Endothelial cell of umbilical vein (primary cell): ENCODE measurements at regions of chr22 and their contacts with region 1.

Region 1: GRCh38 chr22:17742527-17742902 is 31.8 kb downstream of the BID start:
- DNase-seq: peak; percentile 49
- H3K4me3 ChIP-seq: no peak overlapping the region
- H3K27ac ChIP-seq: no peak overlapping the region
- H3K4me1 ChIP-seq: no peaks in the 10 kb centered on the region
- H3K27me3 ChIP-seq: no peaks in the 10 kb centered on the region
- CTCF ChIP-seq: peak; percentile 66 to 88
- POLR2A ChIP-seq: no peak

Region 2: GRCh38 chr22:17570851-17571641 is 171.5 kb before region 1 on chr22:
- CTCF ChIA-PET with region 1: no interaction called
- POLR2A ChIA-PET with region 1: no interaction called
- dilution Hi-C with region 1: no loop called
- intact Hi-C with region 1: no loop called
- DNase-seq: no peak
- H3K4me3 ChIP-seq: no peak overlapping the region
- H3K27ac ChIP-seq: no peak overlapping the region
- H3K4me1 ChIP-seq: peaks cover 3% of the 10 kb centered on the region
- H3K27me3 ChIP-seq: no peaks in the 10 kb centered on the region
- CTCF ChIP-seq: no peak
- POLR2A ChIP-seq: no peak

Region 3: DNA sequence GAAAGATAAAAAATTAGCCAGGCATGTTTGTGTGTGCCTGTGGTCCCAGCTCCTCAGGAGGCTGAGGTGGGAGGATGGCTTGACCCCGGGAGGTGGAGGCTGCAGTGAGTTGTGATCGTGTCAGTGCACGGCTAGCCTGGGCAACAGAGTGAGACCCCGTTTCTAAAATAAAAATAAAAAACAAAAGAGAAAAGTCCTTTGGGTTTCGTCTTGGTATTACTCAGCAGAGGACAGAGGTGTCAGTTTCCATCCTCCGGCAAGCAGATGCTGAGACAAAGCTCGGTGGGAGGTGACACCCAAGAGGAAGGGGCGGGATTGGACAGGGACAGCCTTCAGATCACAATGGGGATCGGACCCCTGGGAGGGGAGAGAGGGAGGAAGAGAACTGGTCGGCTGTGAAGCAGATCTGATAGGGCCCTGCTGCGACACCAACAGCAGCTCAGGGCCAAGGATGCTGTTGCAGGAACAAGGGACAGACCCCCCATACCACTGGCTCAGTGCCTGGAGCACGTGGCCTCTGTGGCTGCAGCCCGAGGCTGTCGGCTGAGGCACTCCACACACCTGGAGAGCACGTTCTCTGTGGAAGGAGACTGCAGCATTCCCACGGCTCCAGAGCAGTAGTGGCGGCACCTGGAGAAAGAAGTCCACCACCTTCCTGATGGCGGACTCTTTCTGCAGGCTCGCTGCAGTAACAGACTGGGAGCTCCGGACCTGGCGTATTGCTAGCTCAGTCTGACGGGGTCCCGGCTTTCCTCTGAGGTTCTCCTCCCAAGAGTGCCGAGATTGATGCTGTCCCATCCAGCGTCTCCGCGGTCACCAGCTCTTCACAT is 37.0 kb after region 1 on chr22:
- CTCF ChIA-PET with region 1: interaction called, 99 read pairs
- POLR2A ChIA-PET with region 1: no interaction called
- dilution Hi-C with region 1: no loop called
- intact Hi-C with region 1: no loop called
- DNase-seq: no peak
- H3K4me3 ChIP-seq: no peak overlapping the region
- H3K27ac ChIP-seq: no peak overlapping the region
- H3K4me1 ChIP-seq: peaks cover 5% of the 10 kb centered on the region
- H3K27me3 ChIP-seq: no peaks in the 10 kb centered on the region
- CTCF ChIP-seq: no peak
- POLR2A ChIP-seq: no peak

Region 4: GRCh38 chr22:17785185-17786184 is 43.0 kb after region 1 on chr22:
- CTCF ChIA-PET with region 1: interaction called, 99 read pairs
- POLR2A ChIA-PET with region 1: no interaction called
- dilution Hi-C with region 1: no loop called
- intact Hi-C with region 1: loop called (anchors 1 kb)
- DNase-seq: peak; percentile 11
- H3K4me3 ChIP-seq: no peak overlapping the region
- H3K27ac ChIP-seq: no peak overlapping the region
- H3K4me1 ChIP-seq: peaks cover 9% of the 10 kb centered on the region
- H3K27me3 ChIP-seq: no peaks in the 10 kb centered on the region
- CTCF ChIP-seq: peak; percentile 42 to 64
- POLR2A ChIP-seq: no peak

Region 5: GRCh38 chr22:17830043-17830961 is 87.8 kb after region 1 on chr22:
- CTCF ChIA-PET with region 1: interaction called, 3 read pairs
- POLR2A ChIA-PET with region 1: no interaction called
- dilution Hi-C with region 1: no loop called
- intact Hi-C with region 1: loop called (anchors 2 kb)
- DNase-seq: peak; percentile 82
- H3K4me3 ChIP-seq: no peak overlapping the region
- H3K27ac ChIP-seq: no peak overlapping the region
- H3K4me1 ChIP-seq: no peaks in the 10 kb centered on the region
- H3K27me3 ChIP-seq: no peaks in the 10 kb centered on the region
- CTCF ChIP-seq: peak; percentile 97
- POLR2A ChIP-seq: no peak